Right cardiac atrium (tissue), 5 donors: ENCODE measurements at regions of chr1 and their contacts with region 1.

Region 1: DNA sequence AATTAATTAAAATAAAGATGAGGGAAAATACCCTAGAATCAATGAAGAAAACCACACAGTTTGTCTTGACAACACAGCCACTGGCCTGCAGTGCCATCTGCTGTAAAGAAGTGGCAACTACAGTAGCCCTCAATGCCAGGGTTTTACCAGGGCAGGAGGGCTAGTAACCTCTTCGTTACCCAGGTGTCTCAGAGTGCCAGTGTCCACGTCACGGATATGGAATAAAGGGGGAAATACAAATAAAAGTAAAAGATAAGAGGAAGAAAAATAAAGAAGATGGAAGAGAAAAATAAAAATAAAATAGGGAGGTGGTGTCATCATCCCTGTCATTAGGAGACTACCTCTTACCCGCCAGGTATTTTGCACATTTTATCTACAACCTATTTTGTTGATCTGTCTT is 14.2 kb upstream of the SLC44A3 start:
- DNase-seq: peak; percentile 37 to 72 (median 63)
- ATAC-seq: peak in 1 of 2 donors; percentile 49
- H3K4me3 ChIP-seq: no peak overlapping the region
- H3K27ac ChIP-seq: no peak overlapping the region
- H3K4me1 ChIP-seq: peaks cover 7% of the 10 kb centered on the region
- H3K27me3 ChIP-seq: no peaks in the 10 kb centered on the region

Region 2: DNA sequence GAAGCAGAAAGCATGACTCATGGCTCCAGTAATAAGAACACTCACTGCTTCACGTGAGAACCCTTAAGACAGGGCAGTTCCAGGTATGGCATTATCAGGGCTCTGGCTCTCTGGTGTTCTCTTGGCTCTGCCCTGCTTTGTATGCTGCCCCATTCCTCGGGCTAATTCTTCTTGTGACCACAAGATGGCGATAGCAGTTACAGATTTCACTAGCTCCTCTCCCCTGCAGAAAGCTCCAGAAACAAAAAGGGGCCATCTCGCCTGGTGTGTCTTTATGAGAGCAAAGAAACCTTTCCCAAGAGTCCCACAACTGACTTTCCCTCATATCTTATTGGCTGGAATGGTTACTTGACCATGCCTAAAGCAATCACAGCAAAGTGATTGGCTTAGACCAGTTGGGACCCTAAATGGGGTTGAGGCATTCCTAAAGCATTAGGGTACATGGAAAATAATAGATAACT is 324.4 kb before region 1 on chr1:
- intact Hi-C with region 1: loop called in 2 of 4 experiments (anchors 5 to 10 kb)
- DNase-seq: peak in 2 of 3 donors; percentile 13 to 42
- ATAC-seq: peak; percentile 85 to 87
- H3K4me3 ChIP-seq: no peak overlapping the region
- H3K27ac ChIP-seq: no peak overlapping the region
- H3K4me1 ChIP-seq: no peaks in the 10 kb centered on the region
- H3K27me3 ChIP-seq: no peaks in the 10 kb centered on the region

Region 3: GRCh38 chr1:94522304-94522703 is 283.6 kb before region 1 on chr1:
- intact Hi-C with region 1: loop called (anchors 5 to 10 kb)
- DNase-seq: no peak
- ATAC-seq: peak; percentile 60 to 61
- H3K4me3 ChIP-seq: no peak overlapping the region
- H3K27ac ChIP-seq: no peak overlapping the region
- H3K4me1 ChIP-seq: no peaks in the 10 kb centered on the region
- H3K27me3 ChIP-seq: no peaks in the 10 kb centered on the region

Region 4: DNA sequence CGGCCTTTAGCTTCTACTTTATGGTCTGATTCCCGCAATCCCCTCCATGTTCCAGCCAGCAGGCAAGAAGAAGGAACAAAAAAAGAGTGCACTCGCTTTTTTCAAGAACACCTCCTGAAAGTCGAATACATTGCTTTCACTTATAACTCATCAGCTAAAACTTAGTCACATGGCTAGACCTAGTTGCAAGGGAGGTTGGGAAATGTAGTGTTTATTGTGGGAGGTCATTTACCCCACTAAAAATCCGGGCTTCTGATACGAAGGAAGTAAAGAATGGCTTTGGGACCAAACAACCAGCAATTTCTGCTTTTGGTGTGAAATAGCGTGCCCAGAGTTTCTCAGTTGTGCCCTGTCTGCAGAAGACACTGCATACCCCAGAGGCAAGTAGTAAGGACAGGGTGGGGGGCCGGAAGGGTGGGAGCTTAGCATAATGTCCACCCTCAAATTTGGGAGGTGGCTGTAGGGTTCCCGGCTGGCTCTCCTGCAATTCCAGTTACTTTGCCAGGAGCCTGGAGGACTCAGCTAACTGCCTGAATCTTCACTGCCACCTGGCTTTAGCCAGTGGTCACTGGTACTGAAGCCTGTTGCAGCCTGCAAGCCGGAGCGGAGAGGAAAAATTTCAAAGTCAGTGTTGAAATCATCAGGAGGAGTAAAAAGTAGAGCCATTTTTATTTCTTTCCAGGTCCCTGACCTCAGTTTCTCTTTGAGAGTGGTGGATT is 206.7 kb before region 1 on chr1:
- intact Hi-C with region 1: loop called in 1 of 4 experiments (anchors 5 kb)
- DNase-seq: peak in 1 of 3 donors; percentile 66
- ATAC-seq: peak; percentile 68 to 84
- H3K4me3 ChIP-seq: no peak overlapping the region
- H3K27ac ChIP-seq: no peak overlapping the region
- H3K4me1 ChIP-seq: no peaks in the 10 kb centered on the region
- H3K27me3 ChIP-seq: no peaks in the 10 kb centered on the region

Region 5: DNA sequence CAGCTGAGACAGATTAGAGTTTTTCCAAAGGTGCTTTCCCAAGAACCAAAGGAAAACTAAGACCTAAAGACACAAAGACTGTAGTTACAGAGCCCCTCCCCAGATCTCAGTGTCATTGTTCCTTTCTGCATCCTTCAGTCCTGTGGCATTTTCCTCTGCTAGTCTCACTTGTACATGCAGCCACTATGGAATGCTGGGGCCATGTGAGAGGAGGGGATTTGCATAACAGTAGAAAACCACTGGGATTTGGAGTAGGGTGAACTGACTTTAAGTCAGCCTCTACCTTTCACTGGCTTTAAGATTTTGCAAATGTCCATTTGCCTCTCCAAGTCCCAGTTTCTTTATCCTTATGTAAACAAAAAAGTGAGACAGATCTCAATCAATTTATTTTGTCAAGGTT is 144.9 kb before region 1 on chr1:
- intact Hi-C with region 1: loop called in 1 of 4 experiments (anchors 10 kb)
- DNase-seq: no peak
- ATAC-seq: no peak
- H3K4me3 ChIP-seq: no peak overlapping the region
- H3K27ac ChIP-seq: no peak overlapping the region
- H3K4me1 ChIP-seq: peaks cover 3% of the 10 kb centered on the region
- H3K27me3 ChIP-seq: no peaks in the 10 kb centered on the region